IMR-90 (cell line): ENCODE measurements at regions of chr4 and their contacts with region 1.

Region 1: GRCh38 chr4:100147198-100147597 is 43.1 kb downstream of the DDIT4L start:
- DNase-seq: no peak
- ATAC-seq: no peak
- H3K4me3 ChIP-seq: no peak overlapping the region
- H3K27ac ChIP-seq: no peak overlapping the region
- H3K4me1 ChIP-seq: no peaks in the 10 kb centered on the region
- H3K27me3 ChIP-seq: no peaks in the 10 kb centered on the region
- CTCF ChIP-seq: no peak
- POLR2A ChIP-seq: no peak
- RAD21 ChIP-seq: no peak

Region 2: GRCh38 chr4:100240008-100240407 is 92.8 kb after region 1 on chr4:
- CTCF ChIA-PET with region 1: no interaction called
- POLR2A ChIA-PET with region 1: no interaction called
- dilution Hi-C with region 1: no loop called
- in situ Hi-C with region 1: loop called (anchors 25 kb)
- intact Hi-C with region 1: no loop called
- DNase-seq: no peak
- ATAC-seq: no peak
- H3K4me3 ChIP-seq: no peak overlapping the region
- H3K27ac ChIP-seq: no peak overlapping the region
- H3K4me1 ChIP-seq: no peaks in the 10 kb centered on the region
- H3K27me3 ChIP-seq: no peaks in the 10 kb centered on the region
- CTCF ChIP-seq: no peak
- POLR2A ChIP-seq: no peak
- RAD21 ChIP-seq: no peak